Mammary epithelial cell (primary cell): ENCODE measurements at regions of chr3 and their contacts with region 1.

Region 1: DNA sequence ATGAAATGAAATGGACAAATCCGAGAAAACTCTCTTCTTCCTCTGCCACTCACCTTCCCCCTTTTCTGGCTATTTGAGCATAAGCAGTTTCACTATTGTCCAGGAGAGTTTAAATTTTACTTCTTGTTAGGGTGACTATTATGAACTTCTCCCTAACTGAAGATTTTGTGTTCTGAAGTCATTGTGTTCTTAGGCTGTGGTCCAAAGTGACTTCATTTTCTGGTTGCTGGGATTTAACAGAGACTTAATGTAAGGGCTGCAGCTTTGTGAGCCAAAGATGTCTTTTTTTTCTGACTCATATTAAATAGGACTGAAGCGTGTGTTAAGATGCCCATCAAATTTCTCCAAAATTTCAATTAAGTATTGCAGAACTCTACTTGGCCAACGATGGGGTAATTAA is 46.5 kb upstream of the FSTL1 start:
- DNase-seq: peak; percentile 85
- H3K4me3 ChIP-seq: no peak overlapping the region
- H3K27ac ChIP-seq: no peak overlapping the region
- H3K4me1 ChIP-seq: peaks cover 26% of the 10 kb centered on the region
- H3K27me3 ChIP-seq: no peaks in the 10 kb centered on the region
- CTCF ChIP-seq: no peak

Region 2: DNA sequence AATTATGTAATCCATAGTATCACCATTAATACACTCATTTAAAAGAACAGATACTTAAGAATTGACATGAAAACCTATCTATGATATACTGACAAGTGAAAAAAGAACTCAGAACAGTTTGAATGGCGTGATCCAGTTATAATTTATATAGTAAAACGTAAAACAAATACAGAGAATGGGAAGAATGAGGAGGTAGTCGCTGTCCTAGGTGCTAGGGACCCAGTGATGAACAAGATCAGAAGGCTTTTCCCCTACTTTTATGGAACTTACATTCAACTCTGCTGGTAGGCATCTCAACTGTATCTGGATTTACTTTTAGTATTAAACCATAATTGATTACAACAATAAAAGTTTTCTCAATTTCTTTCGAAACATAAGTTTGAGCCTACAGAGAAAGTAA is 434.9 kb before region 1 on chr3:
- CTCF ChIA-PET with region 1: no interaction called
- dilution Hi-C with region 1: no loop called
- in situ Hi-C with region 1: no loop called
- intact Hi-C with region 1: no loop called
- DNase-seq: no peak
- H3K4me3 ChIP-seq: no peak overlapping the region
- H3K27ac ChIP-seq: no peak overlapping the region
- H3K4me1 ChIP-seq: no peaks in the 10 kb centered on the region
- H3K27me3 ChIP-seq: no peaks in the 10 kb centered on the region
- CTCF ChIP-seq: no peak

Region 3: DNA sequence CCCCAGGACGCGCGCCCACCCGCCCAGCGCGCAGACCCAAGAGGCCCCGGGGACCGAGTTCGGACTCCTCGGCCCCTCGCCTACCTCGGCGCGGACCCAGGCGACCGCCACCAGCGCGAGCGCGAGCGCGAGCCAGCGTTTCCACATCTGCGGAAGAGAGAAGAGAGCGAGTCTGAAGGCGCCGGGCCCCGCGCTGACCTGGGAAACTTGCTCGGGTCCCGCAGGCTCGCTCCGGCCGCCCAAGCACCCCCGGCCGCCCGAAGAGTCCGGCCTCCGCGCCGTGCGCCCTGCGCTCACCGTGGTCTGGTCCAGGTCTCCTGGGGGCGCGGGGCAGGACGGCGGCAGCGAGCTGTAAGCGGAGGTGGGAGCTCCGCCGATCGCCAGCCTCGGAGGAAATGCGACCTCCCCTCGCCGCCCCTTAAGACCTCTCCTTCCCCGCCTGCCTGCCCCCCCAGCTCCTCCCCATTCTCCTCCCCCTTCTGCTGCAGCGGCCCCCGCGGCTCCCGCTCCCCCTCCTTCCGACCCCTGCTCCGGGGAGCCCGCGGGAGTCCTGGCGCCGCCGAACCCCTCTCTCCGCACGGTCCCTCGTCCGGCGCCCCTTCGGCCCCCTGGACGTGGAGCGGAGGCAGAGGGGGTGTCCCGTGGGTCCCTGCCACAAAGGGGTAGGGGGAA is 46.6 kb before region 1 on chr3 and contains the start of gene FSTL1:
- CTCF ChIA-PET with region 1: no interaction called
- dilution Hi-C with region 1: no loop called
- in situ Hi-C with region 1: no loop called
- intact Hi-C with region 1: loop called (anchors 1 kb)
- DNase-seq: peak; percentile 45
- H3K4me3 ChIP-seq: peak within 1 kb of the TSS; percentile 81 to 97 (median 81)
- H3K27ac ChIP-seq: peak within 1 kb of the TSS; percentile 63
- H3K4me1 ChIP-seq: peaks cover 19% of the 10 kb centered on the region
- H3K27me3 ChIP-seq: no peaks in the 10 kb centered on the region
- CTCF ChIP-seq: no peak
- total RNA-seq, gene FSTL1: 109 to 161 TPM